ENCODE measurements at regions of chr14 and their contacts with region 1.

Region 1: DNA sequence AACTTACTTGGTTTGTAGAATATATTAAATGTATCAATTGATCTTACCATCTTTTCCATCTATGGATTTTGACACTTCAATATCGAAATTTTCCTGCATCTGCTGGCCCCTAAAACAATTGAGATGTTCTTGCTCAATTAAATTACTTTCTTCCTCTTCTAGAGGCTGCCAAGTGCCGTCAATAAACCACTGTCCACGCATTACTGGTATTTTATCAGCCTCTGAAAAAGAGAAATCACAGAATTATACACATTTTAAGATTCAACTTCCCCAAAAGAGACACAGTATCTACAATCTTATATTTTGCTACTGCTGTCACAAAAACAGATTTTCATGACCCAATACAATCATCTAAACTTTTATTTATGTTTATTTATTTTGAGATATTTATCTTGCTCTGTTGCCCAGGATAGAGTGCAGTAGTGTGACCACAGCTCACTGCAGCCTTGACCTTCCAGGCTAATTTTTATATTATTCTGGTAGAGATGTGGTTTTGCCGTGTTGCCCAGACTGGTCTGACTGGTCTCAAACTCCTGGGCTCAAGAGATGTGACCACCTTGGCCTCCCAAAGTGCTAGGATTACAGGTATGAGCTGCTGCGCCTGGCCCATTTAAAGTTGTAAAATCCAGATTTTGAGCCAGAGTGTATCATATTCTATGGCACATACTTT is 49.4 kb downstream of the DDHD1 start:
- H3K4me3 ChIP-seq: no peak overlapping the region
- H3K27ac ChIP-seq: no peak overlapping the region
- H3K4me1 ChIP-seq: 0 out of 2 replicates have a peak, but pooled peaks cover 3% of the 10 kb centered on the region
- CTCF ChIP-seq: no peak

Region 2: DNA sequence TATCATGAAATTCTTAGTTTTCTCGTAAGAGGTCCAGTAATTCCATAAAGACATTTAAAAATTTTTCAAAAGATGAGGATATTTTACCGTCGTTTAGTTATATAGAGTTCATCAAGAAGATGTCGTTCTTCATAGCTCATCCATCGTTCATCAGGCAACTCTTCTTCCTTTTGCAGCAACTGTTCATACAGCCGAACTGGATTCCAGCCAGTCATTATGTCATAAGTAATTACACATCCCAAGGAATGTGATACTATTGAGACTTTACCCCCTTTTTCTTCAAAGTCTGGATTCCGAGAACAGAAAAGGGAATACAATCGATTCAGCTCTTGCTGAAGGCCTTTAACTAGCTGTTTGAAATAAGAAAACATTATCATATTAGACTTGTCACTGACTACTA is 40.9 kb before region 1 on chr14:
- CTCF ChIA-PET with region 1: no interaction called
- POLR2A ChIA-PET with region 1: no interaction called
- H3K4me3 ChIP-seq: no peak overlapping the region
- H3K27ac ChIP-seq: no peak overlapping the region
- H3K4me1 ChIP-seq: peaks cover 4% of the 10 kb centered on the region; the same call in 1 of the 2 replicates
- CTCF ChIP-seq: no peak

Region 3: DNA sequence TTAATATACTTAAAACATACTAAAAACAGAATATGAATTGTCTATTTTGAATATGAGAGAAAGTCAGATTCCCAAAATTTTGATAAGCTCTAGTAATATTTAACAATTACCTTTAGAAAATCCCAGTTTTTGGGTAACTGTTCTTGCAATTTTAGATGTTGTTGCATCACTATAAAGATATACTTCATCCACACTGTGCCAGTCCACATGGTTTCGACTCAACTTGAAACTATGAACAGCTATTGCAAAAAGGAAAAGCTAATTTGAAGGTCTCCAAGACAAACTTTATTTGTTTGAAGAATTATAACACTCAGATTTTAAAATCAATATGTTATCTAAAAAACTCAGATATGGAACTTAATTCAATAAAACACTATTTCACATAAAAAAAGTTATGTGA is 10.6 kb before region 1 on chr14:
- CTCF ChIA-PET with region 1: no interaction called
- POLR2A ChIA-PET with region 1: no interaction called
- H3K4me3 ChIP-seq: no peak overlapping the region
- H3K27ac ChIP-seq: no peak overlapping the region
- H3K4me1 ChIP-seq: no peaks in the 10 kb centered on the region
- CTCF ChIP-seq: no peak

Region 4: DNA sequence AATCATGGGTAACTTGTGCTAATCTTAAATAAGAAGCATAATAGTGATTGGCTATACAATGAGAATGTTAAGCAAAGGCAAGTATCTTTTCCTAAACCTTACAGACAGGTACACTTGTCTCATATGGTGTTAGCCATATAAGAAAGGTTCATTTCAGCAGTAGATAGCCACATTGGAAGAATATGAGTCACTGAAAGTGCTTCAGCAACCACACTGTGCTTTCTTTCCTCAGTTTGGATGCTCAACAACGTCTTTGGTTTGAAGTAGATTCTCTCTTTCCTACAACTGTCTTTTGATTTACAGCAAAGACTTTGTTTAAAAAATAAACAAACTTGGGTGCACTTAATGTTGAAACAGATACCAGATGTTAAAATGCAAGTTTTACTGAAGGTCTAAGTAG is 40.5 kb after region 1 on chr14:
- CTCF ChIA-PET with region 1: no interaction called
- POLR2A ChIA-PET with region 1: interaction called, 13 read pairs
- H3K4me3 ChIP-seq: no peak overlapping the region
- H3K27ac ChIP-seq: no peak overlapping the region
- H3K4me1 ChIP-seq: no peaks in the 10 kb centered on the region
- CTCF ChIP-seq: no peak